WTC11 (cell line): ENCODE measurements at regions of chr7 and their contacts with region 1.

Region 1: GRCh38 chr7:47266131-47266706 is 315.7 kb downstream of the TNS3 start:
- DNase-seq: peak; percentile 64
- ATAC-seq: peak; percentile 97
- H3K4me3 Mint-ChIP-seq: no peak overlapping the region
- H3K27ac Mint-ChIP-seq: no peak overlapping the region
- H3K4me1 Mint-ChIP-seq: peaks cover 3% of the 10 kb centered on the region
- H3K27me3 Mint-ChIP-seq: no peaks in the 10 kb centered on the region
- CTCF ChIP-seq: peak; percentile 89

Region 2: DNA sequence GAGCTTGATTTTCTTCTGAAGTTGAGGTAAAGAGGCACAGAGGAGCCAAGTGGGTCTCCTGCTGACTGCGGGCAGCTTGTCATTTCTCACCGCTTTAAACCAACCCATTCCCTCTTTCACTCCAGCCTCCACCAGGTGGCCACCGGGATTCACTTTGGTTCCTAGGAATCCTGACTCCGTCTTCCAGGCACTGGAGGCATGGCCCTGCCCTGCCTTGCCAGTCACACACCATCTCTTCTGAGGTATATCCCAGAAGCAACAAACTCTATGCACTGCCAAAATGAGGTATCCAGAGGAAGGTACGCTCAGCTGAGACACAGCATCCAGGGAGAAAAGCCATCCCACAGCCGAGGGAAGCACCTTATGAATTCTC is 34.9 kb after region 1 on chr7:
- CTCF ChIA-PET with region 1: interaction called, 14 read pairs
- POLR2A ChIA-PET with region 1: no interaction called
- DNase-seq: peak; percentile 62
- ATAC-seq: peak; percentile 79
- H3K4me3 Mint-ChIP-seq: no peak overlapping the region
- H3K27ac Mint-ChIP-seq: no peak overlapping the region
- H3K4me1 Mint-ChIP-seq: peaks cover 12% of the 10 kb centered on the region
- H3K27me3 Mint-ChIP-seq: no peaks in the 10 kb centered on the region
- CTCF ChIP-seq: no peak

Region 3: GRCh38 chr7:47379629-47380324 is 113.6 kb after region 1 on chr7:
- CTCF ChIA-PET with region 1: interaction called, 17 read pairs
- POLR2A ChIA-PET with region 1: no interaction called
- DNase-seq: peak; percentile 39
- ATAC-seq: peak; percentile 57
- H3K4me3 Mint-ChIP-seq: no peak overlapping the region
- H3K27ac Mint-ChIP-seq: peak overlapping the region; percentile 88
- H3K4me1 Mint-ChIP-seq: peaks cover 42% of the 10 kb centered on the region
- H3K27me3 Mint-ChIP-seq: no peaks in the 10 kb centered on the region
- CTCF ChIP-seq: no peak

Region 4: GRCh38 chr7:47444379-47445057 is 178.3 kb after region 1 on chr7:
- CTCF ChIA-PET with region 1: interaction called, 13 read pairs
- POLR2A ChIA-PET with region 1: no interaction called
- DNase-seq: no peak
- ATAC-seq: no peak
- H3K4me3 Mint-ChIP-seq: no peak overlapping the region
- H3K27ac Mint-ChIP-seq: peak overlapping the region; percentile 20; the same call in 1 of the 2 replicates
- H3K4me1 Mint-ChIP-seq: peaks cover 11% of the 10 kb centered on the region
- H3K27me3 Mint-ChIP-seq: no peaks in the 10 kb centered on the region
- CTCF ChIP-seq: no peak

Region 5: DNA sequence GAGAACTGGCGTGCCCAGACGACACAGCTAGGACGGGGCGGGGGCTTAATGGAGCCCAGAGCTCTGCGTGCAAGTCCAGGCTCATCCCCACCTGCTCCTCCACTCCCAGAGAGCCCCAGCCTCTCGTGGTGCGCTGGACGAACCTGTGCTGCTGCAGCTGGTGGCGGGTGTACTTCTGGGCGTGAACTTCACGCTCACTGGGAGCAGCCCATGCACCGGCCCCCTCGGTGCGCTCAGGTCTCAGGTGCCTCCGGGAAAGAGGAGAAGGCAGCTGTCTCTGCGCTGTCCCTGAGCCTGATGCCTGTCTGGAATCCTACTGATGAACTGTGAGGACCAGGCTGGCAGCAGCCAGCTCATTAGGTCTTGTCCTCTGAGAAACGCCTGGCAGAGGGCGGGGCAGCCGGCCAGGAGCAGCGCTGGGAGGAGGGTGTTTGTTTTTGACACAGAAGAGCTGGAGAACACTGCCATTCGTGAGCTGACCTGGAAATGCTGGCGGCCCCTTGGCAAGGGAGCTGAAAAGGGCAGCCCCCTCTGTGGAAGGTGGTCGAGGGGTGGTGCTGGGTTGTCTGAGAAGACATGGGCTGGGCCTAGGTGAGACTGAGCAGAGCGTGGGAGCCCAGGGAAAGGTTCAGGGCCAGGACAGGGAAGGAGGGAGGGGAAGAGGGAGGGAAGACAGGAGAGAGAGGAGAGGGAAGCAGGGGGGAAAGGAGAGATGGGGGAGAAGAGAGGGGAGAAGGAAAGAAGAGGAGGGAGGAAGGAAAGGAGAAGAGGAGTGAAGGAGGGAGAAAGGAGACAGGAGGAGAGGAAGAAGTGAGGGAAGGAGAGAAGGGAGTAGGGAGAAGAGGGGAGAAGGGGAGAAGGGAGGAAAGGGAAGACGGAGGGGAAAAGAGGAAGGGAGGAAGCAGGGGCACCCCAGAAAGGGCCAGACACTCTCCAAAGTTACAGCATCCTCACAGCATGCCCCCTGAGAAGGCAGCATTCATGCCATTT is 369.2 kb after region 1 on chr7:
- CTCF ChIA-PET with region 1: interaction called, 12 read pairs
- POLR2A ChIA-PET with region 1: no interaction called
- DNase-seq: peak; percentile 40
- ATAC-seq: peak; percentile 72
- H3K4me3 Mint-ChIP-seq: peak overlapping the region; percentile 60
- H3K27ac Mint-ChIP-seq: no peak overlapping the region
- H3K4me1 Mint-ChIP-seq: peaks cover 33% of the 10 kb centered on the region
- H3K27me3 Mint-ChIP-seq: peaks cover 16% of the 10 kb centered on the region
- CTCF ChIP-seq: no peak

Region 6: GRCh38 chr7:47852330-47853245 is 586.4 kb after region 1 on chr7:
- CTCF ChIA-PET with region 1: interaction called, 12 read pairs
- POLR2A ChIA-PET with region 1: no interaction called
- DNase-seq: peak; percentile 51
- ATAC-seq: peak; percentile 96
- H3K4me3 Mint-ChIP-seq: no peak overlapping the region
- H3K27ac Mint-ChIP-seq: no peak overlapping the region
- H3K4me1 Mint-ChIP-seq: no peaks in the 10 kb centered on the region
- H3K27me3 Mint-ChIP-seq: no peaks in the 10 kb centered on the region; the same call in 1 of the 2 replicates
- CTCF ChIP-seq: no peak